Activated B cell treated with CpG ODN at 0.5 μM for 24 hours (primary cell): ENCODE measurements at regions of chr13 and their contacts with region 1.

Region 1: DNA sequence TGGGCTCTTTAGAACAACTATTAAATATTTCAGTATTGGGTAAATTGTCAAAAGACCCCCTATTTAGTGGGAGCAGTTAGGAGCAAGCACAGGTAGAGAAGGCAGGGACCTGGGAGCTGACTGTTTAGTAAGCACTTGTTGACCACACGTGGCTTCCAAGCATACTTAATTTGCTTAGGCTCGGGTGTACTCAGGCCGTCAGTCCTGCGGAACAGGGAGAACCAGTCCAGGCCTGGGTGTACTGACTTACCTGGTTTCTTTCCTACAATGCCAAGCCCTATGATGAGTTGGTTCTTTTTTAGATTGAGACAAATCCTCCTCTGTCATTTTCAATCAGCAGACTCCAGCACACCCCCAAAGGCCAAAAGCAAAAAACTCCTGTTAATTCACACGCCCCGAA is 90.0 kb downstream of the WDFY2 start:
- DNase-seq: no peak
- ATAC-seq: no peak
- H3K4me3 Mint-ChIP-seq: no peak overlapping the region
- H3K27ac Mint-ChIP-seq: no peak overlapping the region
- H3K4me1 Mint-ChIP-seq: peaks cover 38% of the 10 kb centered on the region
- H3K27me3 Mint-ChIP-seq: no peaks in the 10 kb centered on the region
- CTCF ChIP-seq: no peak

Region 2: GRCh38 chr13:51729866-51730546 is 55.7 kb after region 1 on chr13:
- CTCF ChIA-PET with region 1: no interaction called
- POLR2A ChIA-PET with region 1: no interaction called
- intact Hi-C with region 1: loop called (anchors 10 kb)
- DNase-seq: no peak
- ATAC-seq: no peak
- H3K4me3 Mint-ChIP-seq: no peak overlapping the region
- H3K27ac Mint-ChIP-seq: no peak overlapping the region
- H3K4me1 Mint-ChIP-seq: no peaks in the 10 kb centered on the region
- H3K27me3 Mint-ChIP-seq: no peaks in the 10 kb centered on the region
- CTCF ChIP-seq: no peak